Activated T-helper 2 cell treated with anti-CD3 and anti-CD28 coated beads, Interferon-gamma antibody, Interleukin-2, Interleukin-4, amounts not matched to agents 10 μg/mL and 5 μg/mL and 100 μg/mL, durations not matched to agents 14 hours and 24 hours and 36 hours (primary cell): ENCODE measurements at regions of chr9 and their contacts with region 1.

Region 1: GRCh38 chr9:34072868-34073590 is 24.3 kb upstream of the UBAP2 start:
- DNase-seq: no peak
- H3K4me3 Mint-ChIP-seq: no peak overlapping the region
- H3K27ac Mint-ChIP-seq: no peak overlapping the region
- H3K4me1 Mint-ChIP-seq: no peaks in the 10 kb centered on the region
- H3K27me3 Mint-ChIP-seq: no peaks in the 10 kb centered on the region

Region 2: DNA sequence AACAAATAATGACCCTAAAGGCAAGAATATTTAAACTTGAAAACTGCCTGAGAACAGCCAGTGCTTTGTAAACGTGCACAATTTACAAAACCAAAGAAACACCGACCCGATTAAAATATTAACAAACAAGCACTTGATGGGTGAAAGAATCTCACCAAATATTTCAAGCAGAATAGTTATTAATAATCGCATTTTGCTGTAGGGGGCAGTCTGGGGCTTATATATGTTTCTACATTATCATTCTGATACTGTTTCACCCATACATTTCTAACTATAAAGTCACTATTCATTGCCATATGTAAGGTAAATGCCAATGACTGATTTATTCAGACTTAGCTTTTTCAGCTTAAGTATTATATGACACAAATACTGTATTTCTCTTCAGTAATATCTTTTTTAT is 62.0 kb before region 1 on chr9:
- intact Hi-C with region 1: loop called (anchors 5 kb)
- DNase-seq: no peak
- H3K4me3 Mint-ChIP-seq: no peak overlapping the region
- H3K27ac Mint-ChIP-seq: no peak overlapping the region
- H3K4me1 Mint-ChIP-seq: no peaks in the 10 kb centered on the region
- H3K27me3 Mint-ChIP-seq: no peaks in the 10 kb centered on the region